ENCODE measurements at regions of chrX and their contacts with region 1.

Region 1: GRCh38 chrX:79081895-79082512 is 62.5 kb upstream of the GPR174 start:
- DNase-seq: peak; percentile 55
- H3K4me3 Mint-ChIP-seq: peak overlapping the region; percentile 65
- H3K27ac Mint-ChIP-seq: peak overlapping the region; percentile 81
- H3K4me1 Mint-ChIP-seq: peaks cover 41% of the 10 kb centered on the region
- H3K27me3 Mint-ChIP-seq: no peaks in the 10 kb centered on the region

Region 2: DNA sequence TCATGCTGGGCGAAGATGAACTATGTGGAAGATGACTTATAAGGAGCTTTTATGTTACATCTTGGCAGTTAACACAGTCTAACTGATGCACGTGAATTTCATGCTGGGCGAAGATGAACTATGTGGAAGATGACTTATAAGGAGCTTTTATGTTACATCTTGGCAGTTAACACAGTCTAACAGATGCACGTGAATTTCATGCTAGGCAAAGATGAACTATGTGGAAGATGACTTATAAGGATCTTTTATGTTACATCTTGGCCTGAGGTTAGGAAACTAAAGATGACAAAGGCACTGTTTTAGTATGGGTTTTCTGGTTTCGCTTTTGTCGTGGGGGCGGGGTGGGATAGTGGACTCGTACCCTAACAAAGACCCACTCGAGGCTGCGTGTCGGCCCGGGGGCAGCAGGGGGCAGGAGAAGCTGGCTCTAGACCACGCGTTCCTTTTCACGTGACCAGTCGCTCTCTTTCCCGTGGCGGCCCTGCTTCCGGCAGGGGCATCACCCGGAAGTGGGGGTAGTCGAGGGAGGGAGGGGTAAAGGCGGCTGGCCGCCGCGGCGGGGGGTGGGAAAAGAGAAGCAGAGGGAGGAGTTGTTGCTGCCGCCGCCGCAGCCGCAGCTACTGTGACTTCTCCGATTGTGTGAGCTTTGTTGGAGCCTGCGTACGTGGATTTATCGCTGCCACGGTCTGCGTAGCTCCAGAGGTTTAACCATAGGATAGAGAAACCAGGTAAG is 1171.7 kb before region 1 on chrX and contains the start of gene ATP7A:
- CTCF ChIA-PET with region 1: no interaction called
- intact Hi-C with region 1: loop called (anchors 2 kb)
- DNase-seq: peak; percentile 93
- H3K4me3 Mint-ChIP-seq: peak within 1 kb of the TSS; percentile 97
- H3K27ac Mint-ChIP-seq: peak within 1 kb of the TSS; percentile 96
- H3K4me1 Mint-ChIP-seq: peaks cover 12% of the 10 kb centered on the region
- H3K27me3 Mint-ChIP-seq: no peaks in the 10 kb centered on the region
- total RNA-seq, gene ATP7A: 5.3 to 5.5 TPM

Region 3: GRCh38 chrX:78321809-78322208 is 760.2 kb before region 1 on chrX:
- CTCF ChIA-PET with region 1: no interaction called
- intact Hi-C with region 1: loop called (anchors 10 kb)
- DNase-seq: peak; percentile 63
- H3K4me3 Mint-ChIP-seq: peak overlapping the region; percentile 32
- H3K27ac Mint-ChIP-seq: peak overlapping the region; percentile 85
- H3K4me1 Mint-ChIP-seq: peaks cover 36% of the 10 kb centered on the region
- H3K27me3 Mint-ChIP-seq: no peaks in the 10 kb centered on the region

Region 4: DNA sequence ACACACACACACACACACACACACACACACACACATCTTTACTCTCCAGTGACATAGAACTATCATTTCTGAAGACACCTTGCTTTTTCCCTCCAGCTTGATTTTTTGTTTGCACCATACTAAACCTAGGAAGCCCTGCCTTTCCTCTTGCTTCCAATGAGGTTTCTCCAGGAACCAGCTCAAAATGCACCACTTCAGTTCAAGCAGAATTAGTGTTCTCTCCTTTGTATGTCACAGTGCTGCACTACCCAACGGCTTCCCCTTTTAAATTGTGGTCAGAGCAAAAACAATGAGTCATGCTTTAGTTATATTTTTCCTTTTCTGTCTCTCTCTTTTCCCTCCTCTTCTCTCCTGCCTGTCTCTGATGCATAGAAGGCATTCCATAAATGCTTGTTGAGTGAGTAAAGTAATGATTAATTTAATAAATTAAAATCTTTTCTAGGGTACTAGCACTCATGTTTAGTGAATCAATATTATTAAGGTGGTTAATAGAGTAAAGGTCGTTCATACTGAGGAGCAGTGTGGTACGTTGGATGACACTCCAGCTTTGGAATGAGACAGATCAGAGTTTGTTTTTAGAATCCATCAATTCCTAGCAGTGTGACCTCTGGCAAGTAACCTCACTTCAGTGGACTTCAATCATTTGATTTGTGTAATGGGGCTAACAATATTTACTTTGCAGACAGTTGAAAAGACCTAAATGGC is 428.7 kb before region 1 on chrX:
- CTCF ChIA-PET with region 1: no interaction called
- intact Hi-C with region 1: loop called (anchors 5 kb)
- DNase-seq: no peak
- H3K4me3 Mint-ChIP-seq: no peak overlapping the region
- H3K27ac Mint-ChIP-seq: no peak overlapping the region
- H3K4me1 Mint-ChIP-seq: peaks cover 15% of the 10 kb centered on the region
- H3K27me3 Mint-ChIP-seq: no peaks in the 10 kb centered on the region

Region 5: DNA sequence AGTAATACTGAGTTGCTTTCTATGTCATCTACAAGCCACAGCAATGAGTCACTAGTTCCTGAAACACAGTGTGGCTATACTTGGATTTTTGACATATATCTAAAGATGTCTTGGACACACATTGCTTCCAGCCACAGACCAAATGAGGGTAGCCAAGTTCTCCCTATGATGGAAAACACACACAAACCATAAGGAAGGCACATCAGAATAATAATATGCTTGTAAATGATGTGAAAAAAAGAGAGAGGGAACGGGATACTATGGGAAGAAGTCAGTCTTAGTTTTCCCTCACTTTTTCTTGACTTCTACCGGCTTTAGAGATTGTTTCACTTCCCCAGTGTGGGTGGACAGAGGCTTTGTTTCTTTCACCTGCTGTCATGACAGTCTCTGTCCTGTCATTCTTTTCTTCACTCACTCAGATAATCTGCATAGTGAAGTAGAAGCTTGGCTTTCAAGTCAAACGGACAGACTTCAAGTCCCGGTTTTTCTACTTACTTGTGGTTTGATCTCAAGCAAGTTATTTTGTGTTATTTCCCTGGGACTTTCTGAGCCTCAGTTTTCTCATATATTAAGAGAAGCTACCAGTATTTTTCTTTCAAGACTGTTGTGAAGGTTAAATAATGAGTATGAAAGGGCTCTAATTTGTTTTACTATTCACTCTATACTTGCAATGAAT is 102.1 kb before region 1 on chrX:
- CTCF ChIA-PET with region 1: interaction called, 3 read pairs
- intact Hi-C with region 1: loop called (anchors 5 kb)
- DNase-seq: peak; percentile 17
- H3K4me3 Mint-ChIP-seq: peak overlapping the region; percentile 55
- H3K27ac Mint-ChIP-seq: peak overlapping the region; percentile 95
- H3K4me1 Mint-ChIP-seq: peaks cover 21% of the 10 kb centered on the region
- H3K27me3 Mint-ChIP-seq: no peaks in the 10 kb centered on the region

Region 6: GRCh38 chrX:79270401-79270800 is 188.4 kb after region 1 on chrX:
- CTCF ChIA-PET with region 1: interaction called, 4 read pairs
- intact Hi-C with region 1: loop called (anchors 1 kb)
- DNase-seq: peak; percentile 88
- H3K4me3 Mint-ChIP-seq: peak overlapping the region; percentile 52
- H3K27ac Mint-ChIP-seq: peak overlapping the region; percentile 89
- H3K4me1 Mint-ChIP-seq: peaks cover 42% of the 10 kb centered on the region
- H3K27me3 Mint-ChIP-seq: no peaks in the 10 kb centered on the region